ENCODE measurements at regions of chr6 and their contacts with region 1.

Region 1: GRCh38 chr6:27893059-27893835 is 18.9 kb downstream of the OR2B2 start:
- DNase-seq: peak; percentile 94 to 99
- H3K4me3 ChIP-seq: peak overlapping the region; percentile 80
- H3K27ac ChIP-seq: peak overlapping the region; percentile 73
- H3K4me1 ChIP-seq: peaks cover 15% of the 10 kb centered on the region
- H3K27me3 ChIP-seq: no peaks in the 10 kb centered on the region
- CTCF ChIP-seq: no peak

Region 2: GRCh38 chr6:26204332-26205165 is 1688.7 kb before region 1 on chr6:
- CTCF ChIA-PET with region 1: no interaction called
- POLR2A ChIA-PET with region 1: interaction called, 5 read pairs
- intact Hi-C with region 1: loop called (anchors 10 kb)
- DNase-seq: peak; percentile 91 to 94
- H3K4me3 ChIP-seq: peak overlapping the region; percentile 63
- H3K27ac ChIP-seq: peak overlapping the region; percentile 91
- H3K4me1 ChIP-seq: peaks cover 36% of the 10 kb centered on the region
- H3K27me3 ChIP-seq: no peaks in the 10 kb centered on the region
- CTCF ChIP-seq: 0 out of 2 replicates have a peak, but pooled peaks have one; percentile 20

Region 3: GRCh38 chr6:26532699-26533531 is 1360.3 kb before region 1 on chr6:
- CTCF ChIA-PET with region 1: no interaction called
- POLR2A ChIA-PET with region 1: no interaction called
- intact Hi-C with region 1: no loop called
- DNase-seq: peak; percentile 75 to 89
- H3K4me3 ChIP-seq: peak overlapping the region; percentile 81
- H3K27ac ChIP-seq: peak overlapping the region; percentile 21; the same call in 1 of the 2 replicates
- H3K4me1 ChIP-seq: peaks cover 15% of the 10 kb centered on the region
- H3K27me3 ChIP-seq: no peaks in the 10 kb centered on the region
- CTCF ChIP-seq: no peak

Region 4: GRCh38 chr6:27146706-27147505 is 746.3 kb before region 1 on chr6:
- CTCF ChIA-PET with region 1: interaction called, 3 read pairs
- POLR2A ChIA-PET with region 1: interaction called, 69 read pairs
- intact Hi-C with region 1: loop called (anchors 1 kb)
- DNase-seq: peak; percentile 89 to 98
- H3K4me3 ChIP-seq: peak overlapping the region; percentile 91
- H3K27ac ChIP-seq: peak overlapping the region; percentile 75
- H3K4me1 ChIP-seq: peaks cover 2% of the 10 kb centered on the region; the same call in 1 of the 2 replicates
- H3K27me3 ChIP-seq: no peaks in the 10 kb centered on the region
- CTCF ChIP-seq: no peak

Region 5: DNA sequence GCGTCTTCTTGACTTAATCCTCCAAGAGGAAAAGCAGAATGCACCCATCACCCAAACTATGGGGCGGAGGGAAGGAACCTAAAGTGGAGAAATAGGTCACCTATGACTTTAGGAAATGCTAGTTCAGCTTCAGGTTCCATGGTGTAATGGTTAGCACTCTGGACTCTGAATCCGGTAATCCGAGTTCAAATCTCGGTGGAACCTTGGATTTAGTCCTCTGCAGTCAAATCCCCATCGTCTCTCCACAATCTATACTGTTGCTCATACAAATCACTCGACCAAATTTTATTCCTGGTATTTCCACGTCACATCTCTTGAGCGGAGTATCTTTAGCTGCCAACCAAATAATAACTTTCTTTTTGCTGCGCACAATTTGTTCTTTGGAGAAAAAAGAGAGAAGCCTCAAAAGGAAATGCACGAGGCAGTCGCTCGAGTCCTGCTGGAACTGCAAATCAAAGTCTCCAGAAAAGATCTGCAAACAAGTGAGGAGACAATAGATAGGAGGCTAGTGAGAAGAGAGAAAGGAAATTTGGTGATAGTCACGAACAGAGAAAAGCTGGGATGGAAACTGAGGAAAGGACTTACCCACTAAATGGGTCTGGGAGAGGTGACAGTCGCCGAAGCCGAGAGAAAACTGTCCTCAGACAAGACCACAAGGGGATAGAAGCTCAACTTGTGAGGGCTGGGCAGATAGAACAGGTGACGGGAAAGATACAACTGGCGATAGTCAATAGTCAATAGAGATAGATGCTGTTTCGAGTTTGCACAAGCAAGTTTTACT is 597.8 kb before region 1 on chr6:
- CTCF ChIA-PET with region 1: no interaction called
- POLR2A ChIA-PET with region 1: interaction called, 5 read pairs
- intact Hi-C with region 1: loop called (anchors 10 kb)
- DNase-seq: peak; percentile 49 to 73
- H3K4me3 ChIP-seq: peak overlapping the region; percentile 84
- H3K27ac ChIP-seq: no peak overlapping the region
- H3K4me1 ChIP-seq: peaks cover 27% of the 10 kb centered on the region
- H3K27me3 ChIP-seq: no peaks in the 10 kb centered on the region
- CTCF ChIP-seq: no peak

Region 6: DNA sequence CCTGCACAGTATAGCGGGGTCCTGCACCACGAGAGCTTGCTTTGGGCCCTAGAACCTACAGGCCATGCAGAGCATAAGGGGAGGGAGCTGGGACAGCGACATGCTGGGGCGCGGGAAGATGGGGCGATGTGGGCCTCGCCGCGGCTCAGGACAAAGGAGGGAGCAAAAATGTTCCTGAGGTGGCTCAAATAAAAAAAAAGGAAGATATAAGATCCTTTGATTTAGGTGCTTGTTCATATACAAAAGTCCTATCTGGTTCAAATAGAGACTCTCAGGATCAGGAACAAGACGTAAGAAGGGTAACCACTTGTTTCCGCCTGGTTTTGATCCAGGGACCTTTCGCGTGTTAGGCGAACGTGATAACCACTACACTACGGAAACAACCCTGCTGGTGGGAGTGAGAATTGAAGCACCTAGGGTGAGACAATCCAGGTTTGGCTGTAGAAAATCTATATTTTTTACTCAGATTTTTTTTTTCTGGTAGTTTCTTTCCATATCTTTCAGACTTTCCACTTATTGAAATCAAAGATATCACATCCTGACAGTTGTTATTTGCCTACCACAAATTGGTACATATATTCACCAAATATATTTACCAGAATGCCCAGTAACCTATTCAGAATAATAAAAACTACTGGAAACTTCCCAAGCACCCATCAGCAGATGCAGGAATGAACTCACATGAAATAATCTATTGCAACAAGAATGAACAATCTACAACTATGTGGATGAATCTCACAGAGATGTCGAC is 242.5 kb before region 1 on chr6:
- CTCF ChIA-PET with region 1: no interaction called
- POLR2A ChIA-PET with region 1: no interaction called
- intact Hi-C with region 1: no loop called
- DNase-seq: peak; percentile 64 to 72
- H3K4me3 ChIP-seq: peak overlapping the region; percentile 57
- H3K27ac ChIP-seq: no peak overlapping the region
- H3K4me1 ChIP-seq: peaks cover 3% of the 10 kb centered on the region; the same call in 1 of the 2 replicates
- H3K27me3 ChIP-seq: no peaks in the 10 kb centered on the region
- CTCF ChIP-seq: peak; percentile 60

Region 7: DNA sequence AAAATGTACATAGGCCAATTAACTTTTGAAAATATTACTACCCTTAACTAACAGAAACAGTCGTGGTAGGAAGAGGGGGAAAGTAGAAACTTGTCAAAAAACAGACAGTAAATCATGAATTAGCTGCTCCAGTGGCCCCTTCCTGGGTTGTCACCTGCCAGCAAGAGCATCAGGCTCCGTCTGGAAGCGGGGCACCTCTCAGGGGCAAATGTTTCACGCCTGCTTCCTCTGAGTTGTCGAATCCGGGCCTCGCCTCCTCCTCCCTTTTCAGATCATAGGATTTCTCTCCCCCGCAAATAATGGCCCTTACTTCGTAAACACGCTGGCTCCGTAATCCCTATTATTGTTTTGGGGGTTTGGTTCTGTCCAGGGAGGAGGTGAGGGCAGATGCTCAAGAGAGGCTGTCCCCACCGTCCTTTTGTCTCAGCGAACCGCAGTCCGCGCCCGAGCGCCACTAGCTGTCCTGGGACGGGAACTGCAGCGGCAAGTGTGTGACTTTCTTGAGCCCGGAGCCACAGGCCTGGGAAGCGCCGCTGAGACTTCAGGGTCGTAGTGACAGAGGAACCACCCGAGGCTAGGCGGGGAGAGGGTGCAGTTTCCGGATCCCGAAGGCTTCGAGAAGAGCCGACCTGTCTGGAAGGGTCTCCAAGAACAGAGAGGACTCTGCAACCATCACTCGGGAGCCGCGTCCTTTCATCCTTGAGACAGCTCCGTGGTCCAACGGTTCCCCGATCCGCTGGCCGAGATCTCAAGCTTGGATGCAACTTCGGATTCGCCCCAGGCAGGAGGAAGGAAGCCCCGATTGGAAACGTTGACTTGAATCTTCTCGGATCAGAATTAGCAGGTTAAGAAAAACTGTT is 205.9 kb before region 1 on chr6:
- CTCF ChIA-PET with region 1: no interaction called
- POLR2A ChIA-PET with region 1: no interaction called
- intact Hi-C with region 1: loop called (anchors 1 kb)
- DNase-seq: peak; percentile 69 to 87
- H3K4me3 ChIP-seq: peak overlapping the region; percentile 61
- H3K27ac ChIP-seq: peak overlapping the region; percentile 6; the same call in 1 of the 2 replicates
- H3K4me1 ChIP-seq: peaks cover 6% of the 10 kb centered on the region; the same call in 1 of the 2 replicates
- H3K27me3 ChIP-seq: no peaks in the 10 kb centered on the region
- CTCF ChIP-seq: peak; percentile 73; the same call in 1 of the 2 replicates

Region 8: DNA sequence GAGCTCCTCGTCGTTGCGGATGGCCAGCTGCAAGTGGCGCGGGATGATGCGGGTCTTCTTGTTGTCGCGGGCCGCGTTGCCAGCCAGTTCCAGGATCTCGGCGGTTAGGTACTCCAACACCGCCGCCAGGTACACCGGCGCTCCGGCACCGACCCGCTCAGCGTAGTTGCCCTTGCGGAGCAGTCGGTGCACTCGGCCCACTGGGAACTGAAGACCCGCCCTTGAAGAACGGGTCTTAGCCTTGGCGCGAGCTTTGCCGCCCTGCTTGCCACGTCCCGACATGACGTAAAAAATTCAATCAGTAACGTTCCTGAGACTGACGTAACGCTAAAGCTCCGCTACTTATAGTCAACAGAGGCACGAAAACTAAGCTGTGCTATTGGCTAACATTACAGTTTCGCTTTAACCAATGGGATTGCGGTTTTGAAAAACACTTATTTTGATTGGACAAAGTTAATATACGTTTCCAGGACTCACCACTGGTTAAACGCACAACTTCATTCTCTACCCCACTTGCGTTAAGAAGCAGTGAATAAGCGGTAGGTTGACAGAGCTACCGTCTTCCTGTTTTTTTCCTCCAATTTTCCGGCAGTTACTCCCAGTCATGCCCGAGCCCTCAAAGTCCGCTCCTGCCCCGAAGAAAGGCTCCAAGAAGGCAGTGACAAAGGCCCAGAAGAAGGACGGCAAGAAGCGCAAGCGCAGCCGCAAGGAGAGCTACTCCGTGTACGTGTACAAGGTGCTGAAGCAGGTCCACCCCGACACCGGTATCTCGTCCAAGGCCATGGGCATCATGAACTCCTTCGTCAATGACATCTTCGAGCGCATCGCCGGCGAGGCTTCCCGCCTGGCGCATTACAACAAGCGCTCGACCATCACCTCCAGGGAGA is 54.9 kb before region 1 on chr6:
- CTCF ChIA-PET with region 1: interaction called, 4 read pairs
- POLR2A ChIA-PET with region 1: interaction called, 39 read pairs
- intact Hi-C with region 1: loop called (anchors 1 kb)
- DNase-seq: peak; percentile 71 to 85
- H3K4me3 ChIP-seq: peak overlapping the region; percentile 58
- H3K27ac ChIP-seq: peak overlapping the region; percentile 87
- H3K4me1 ChIP-seq: no peaks in the 10 kb centered on the region
- H3K27me3 ChIP-seq: no peaks in the 10 kb centered on the region
- CTCF ChIP-seq: no peak

Region 9: DNA sequence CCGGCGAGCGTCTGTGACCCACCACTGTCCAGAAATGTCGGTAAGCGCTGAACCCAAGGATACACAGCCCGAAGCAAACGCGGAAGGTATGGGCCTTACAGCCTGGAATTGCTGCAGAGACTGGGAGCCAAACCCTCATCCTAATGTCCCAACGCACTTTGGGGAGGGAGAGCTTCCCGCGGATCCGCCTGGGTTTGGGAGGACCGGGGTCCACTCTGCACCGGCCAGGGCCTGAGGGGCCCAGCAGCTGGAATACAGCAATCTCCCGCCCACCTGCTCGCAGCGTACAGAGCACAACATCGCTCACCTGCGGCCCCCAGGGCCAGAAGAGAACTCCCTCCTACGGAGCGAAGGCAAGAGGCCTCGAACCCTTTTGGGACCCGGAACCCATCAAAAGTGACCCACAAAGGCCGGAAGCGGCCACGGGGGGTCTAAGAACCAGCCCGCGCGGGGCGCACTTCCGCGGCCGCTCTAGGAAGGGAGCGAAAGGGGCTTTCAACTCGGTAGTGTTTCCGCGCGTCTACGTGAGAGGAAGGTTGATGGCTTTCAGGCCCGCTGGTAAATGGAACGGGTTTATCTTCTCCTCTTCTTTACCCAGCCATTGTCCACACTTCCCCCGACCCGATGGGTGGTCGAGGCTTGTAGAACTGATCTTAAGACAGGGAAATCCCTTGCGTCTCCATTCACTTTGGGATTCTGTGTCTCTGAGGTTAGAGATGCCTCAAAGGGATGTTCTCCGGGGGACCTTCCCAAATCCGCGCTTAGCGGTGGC is 506.3 kb after region 1 on chr6 and contains the start of gene ZSCAN12:
- CTCF ChIA-PET with region 1: no interaction called
- POLR2A ChIA-PET with region 1: interaction called, 10 read pairs
- intact Hi-C with region 1: no loop called
- DNase-seq: peak; percentile 75 to 84
- H3K4me3 ChIP-seq: peak within 1 kb of the TSS; percentile 74
- H3K27ac ChIP-seq: peak within 1 kb of the TSS; percentile 43
- H3K4me1 ChIP-seq: peaks cover 30% of the 10 kb centered on the region
- H3K27me3 ChIP-seq: no peaks in the 10 kb centered on the region
- CTCF ChIP-seq: peak; percentile 43
- total RNA-seq, gene ZSCAN12: 10.9 and 11.2 TPM in 2 replicates